ENCODE measurements at regions of chr7 and their contacts with region 1.

Region 1: GRCh38 chr7:131633342-131633843 is 77.0 kb upstream of the PODXL start:
- DNase-seq: peak; percentile 63 to 99
- H3K4me3 ChIP-seq: no peak overlapping the region
- H3K27ac ChIP-seq: peak overlapping the region; percentile 92
- H3K4me1 ChIP-seq: peaks cover 77% of the 10 kb centered on the region
- H3K27me3 ChIP-seq: no peaks in the 10 kb centered on the region
- CTCF ChIP-seq: no peak

Region 2: GRCh38 chr7:131934450-131934836 is 301.1 kb after region 1 on chr7:
- CTCF ChIA-PET with region 1: no interaction called
- POLR2A ChIA-PET with region 1: no interaction called
- intact Hi-C with region 1: no loop called
- DNase-seq: no peak
- H3K4me3 ChIP-seq: no peak overlapping the region
- H3K27ac ChIP-seq: no peak overlapping the region
- H3K4me1 ChIP-seq: no peaks in the 10 kb centered on the region
- H3K27me3 ChIP-seq: peaks cover 92% of the 10 kb centered on the region
- CTCF ChIP-seq: no peak

Region 3: DNA sequence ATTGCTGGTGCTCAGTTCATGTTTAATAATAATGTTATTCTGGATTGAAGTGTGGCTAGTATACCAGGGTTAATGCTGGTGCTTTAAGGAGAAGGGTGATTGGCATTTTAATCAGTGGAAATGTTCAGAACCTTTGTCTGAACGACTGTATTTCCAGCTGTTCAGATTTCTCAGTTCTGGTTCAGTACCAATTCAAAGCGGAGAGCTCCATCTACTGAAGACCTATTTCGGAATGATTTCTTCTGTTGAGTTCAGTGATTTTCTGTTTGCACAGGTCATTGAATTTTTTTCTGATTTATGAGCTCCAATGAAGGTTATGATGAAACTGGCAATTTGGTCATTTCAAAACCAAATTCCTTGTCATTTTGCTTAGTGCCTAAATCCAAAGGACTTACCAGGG is 1779.5 kb after region 1 on chr7:
- CTCF ChIA-PET with region 1: no interaction called
- POLR2A ChIA-PET with region 1: interaction called, 14 read pairs
- intact Hi-C with region 1: no loop called
- DNase-seq: no peak
- H3K4me3 ChIP-seq: no peak overlapping the region
- H3K27ac ChIP-seq: no peak overlapping the region
- H3K4me1 ChIP-seq: no peaks in the 10 kb centered on the region
- H3K27me3 ChIP-seq: no peaks in the 10 kb centered on the region
- CTCF ChIP-seq: no peak

Measured in PC-9 (cell line).